K562 (cell line): ENCODE measurements at regions of chr1 and their contacts with region 1.

Region 1: GRCh38 chr1:234599617-234600417 is 10.2 kb downstream of the IRF2BP2 start:
- DNase-seq: peak; percentile 84 to 92 (median 86)
- ATAC-seq: peak; percentile 74
- H3K4me3 ChIP-seq: peak overlapping the region; percentile 46
- H3K27ac ChIP-seq: peak overlapping the region; percentile 90
- H3K4me1 ChIP-seq: peaks cover 21 to 49% of the 10 kb centered on the region in 2 experiments
- H3K27me3 ChIP-seq: no peaks in the 10 kb centered on the region
- CTCF ChIP-seq: peak in 1 of 3 experiments; percentile 3; a peak in 1 of 6 replicates
- EP300 ChIP-seq: peak; percentile 18; the same call in 1 of the 2 replicates
- POLR2A ChIP-seq: peak; percentile 79
- RAD21 ChIP-seq: peak; percentile 4 to 23; a peak in 2 of 4 replicates

Region 2: DNA sequence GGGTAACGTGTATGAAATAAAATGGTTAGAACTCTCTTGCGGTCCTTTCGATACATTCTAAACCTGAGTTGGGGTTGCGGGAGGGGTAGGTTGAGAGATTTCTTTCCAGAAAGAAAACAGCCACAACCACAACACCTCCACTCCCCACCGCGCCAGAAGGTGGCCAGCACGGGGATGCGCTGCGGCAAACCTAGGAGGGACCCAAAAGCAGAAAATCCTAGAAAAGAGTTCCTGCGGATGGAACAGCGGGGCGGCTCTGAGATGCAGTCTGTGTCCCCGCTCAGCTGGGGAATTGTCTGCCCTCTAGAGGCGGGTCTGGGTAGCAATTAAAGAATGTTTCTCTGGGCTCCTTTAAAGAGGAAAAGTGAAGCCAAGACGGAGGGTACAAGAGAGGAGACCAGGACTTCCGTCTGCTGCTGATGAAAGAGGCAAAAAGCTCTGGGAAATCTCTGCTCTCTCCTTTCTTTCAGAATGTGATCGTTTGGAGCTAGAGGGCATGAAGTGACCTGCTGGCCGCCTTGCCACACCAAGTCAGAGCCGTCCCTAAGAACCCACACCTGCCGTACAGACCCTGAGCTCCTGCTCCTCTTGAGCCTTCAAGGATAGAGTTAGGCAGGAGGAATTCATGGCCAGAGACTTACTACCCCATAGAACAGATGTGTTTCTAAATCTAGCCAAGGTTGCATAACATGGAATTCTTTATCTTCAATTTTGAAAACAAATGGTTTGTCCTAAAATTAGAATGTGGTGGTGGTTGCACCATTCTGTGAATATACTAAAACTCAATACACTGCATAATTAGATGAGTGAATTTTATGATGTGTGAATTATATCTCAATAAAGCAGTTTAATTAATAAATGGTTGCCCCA is 273.1 kb before region 1 on chr1:
- CTCF ChIA-PET with region 1: no interaction called
- POLR2A ChIA-PET with region 1: no interaction called
- in situ Hi-C with region 1: loop called (anchors 10 kb)
- intact Hi-C with region 1: no loop called
- DNase-seq: peak; percentile 71 to 78 (median 75)
- ATAC-seq: peak; percentile 90
- H3K4me3 ChIP-seq: no peak overlapping the region
- H3K27ac ChIP-seq: no peak overlapping the region
- H3K4me1 ChIP-seq: no peaks in the 10 kb centered on the region; a peak in 3 of 5 replicates
- H3K27me3 ChIP-seq: peaks cover 17 to 27% of the 10 kb centered on the region in 2 experiments
- CTCF ChIP-seq: peak; percentile 83 to 94 (median 84)
- EP300 ChIP-seq: no peak
- POLR2A ChIP-seq: no peak
- RAD21 ChIP-seq: peak; percentile 47 to 67; a peak in 3 of 4 replicates

Region 3: DNA sequence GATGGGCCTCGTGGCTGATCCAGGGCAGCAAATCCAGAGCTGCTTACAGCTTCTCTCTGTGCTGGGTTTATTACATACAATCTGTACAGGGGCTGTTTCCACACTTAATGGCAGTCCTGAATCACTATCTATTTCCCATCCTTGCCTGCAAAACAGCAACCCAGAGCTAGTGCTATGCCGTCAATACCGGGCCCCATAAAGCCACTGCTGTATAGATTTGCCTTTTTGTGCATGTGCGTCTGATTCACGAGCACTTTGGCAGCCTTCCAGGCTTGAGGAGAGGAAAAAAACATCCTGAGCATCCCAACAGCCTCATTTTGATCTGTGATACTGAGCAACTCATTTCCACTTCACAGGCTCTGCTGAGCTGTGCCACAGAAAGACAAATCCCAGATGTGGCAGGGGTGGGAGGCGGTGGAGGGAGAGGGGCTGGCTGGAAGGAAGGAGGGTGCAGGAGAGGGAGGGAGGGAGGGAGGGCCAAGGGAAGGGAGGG is 55.7 kb before region 1 on chr1:
- CTCF ChIA-PET with region 1: interaction called, 3 read pairs
- POLR2A ChIA-PET with region 1: interaction called, 4 read pairs
- in situ Hi-C with region 1: no loop called
- intact Hi-C with region 1: loop called (anchors 5 kb)
- DNase-seq: peak; percentile 45 to 92 (median 58)
- ATAC-seq: peak; percentile 61
- H3K4me3 ChIP-seq: no peak overlapping the region
- H3K27ac ChIP-seq: peak overlapping the region; percentile 72
- H3K4me1 ChIP-seq: peaks cover 30 to 53% of the 10 kb centered on the region in 2 experiments
- H3K27me3 ChIP-seq: no peaks in the 10 kb centered on the region
- CTCF ChIP-seq: no peak
- EP300 ChIP-seq: peak; percentile 12; the same call in 1 of the 2 replicates
- POLR2A ChIP-seq: no peak
- RAD21 ChIP-seq: no peak

Region 4: DNA sequence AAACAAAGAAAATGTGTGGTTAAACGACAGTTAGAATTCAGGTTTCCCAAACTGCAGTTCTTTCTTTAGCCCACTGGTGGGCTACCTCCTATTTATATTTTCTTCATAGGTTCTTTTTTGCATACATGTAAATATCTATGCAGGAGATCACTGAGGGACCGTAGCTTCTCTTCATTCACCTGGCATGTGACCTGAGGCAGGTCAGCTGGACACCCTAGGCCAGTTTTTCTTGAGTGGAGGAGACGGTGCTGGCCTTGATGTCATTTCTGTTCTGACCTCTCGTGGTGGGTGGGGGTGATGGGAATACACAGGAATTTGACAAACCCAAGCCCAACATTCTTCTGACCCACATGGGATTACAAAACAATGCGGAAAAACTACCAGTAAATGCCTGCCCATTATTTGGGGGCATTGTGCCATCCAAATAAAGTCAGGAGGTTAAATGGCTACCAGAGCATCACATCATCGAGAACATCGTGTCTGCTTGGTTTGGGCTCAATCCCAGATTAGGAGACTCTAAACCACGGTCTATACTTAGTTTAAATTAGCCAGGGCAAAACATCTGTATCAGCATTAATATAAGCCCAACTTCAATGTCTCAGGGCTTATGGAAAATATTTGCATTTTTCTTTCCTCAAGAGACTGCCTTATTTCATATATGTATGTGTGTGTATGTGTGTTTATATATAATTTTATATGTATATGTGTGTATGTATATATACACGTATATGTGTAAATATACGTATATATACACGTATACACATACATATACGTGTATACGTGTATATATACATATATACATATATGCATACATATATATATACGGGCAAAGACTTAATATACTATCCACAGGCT is 17.5 kb after region 1 on chr1:
- CTCF ChIA-PET with region 1: no interaction called
- POLR2A ChIA-PET with region 1: interaction called, 26 read pairs
- in situ Hi-C with region 1: no loop called
- intact Hi-C with region 1: no loop called
- DNase-seq: no peak
- ATAC-seq: no peak
- H3K4me3 ChIP-seq: no peak overlapping the region
- H3K27ac ChIP-seq: no peak overlapping the region
- H3K4me1 ChIP-seq: peaks cover 14 to 21% of the 10 kb centered on the region in 2 experiments
- H3K27me3 ChIP-seq: no peaks in the 10 kb centered on the region
- CTCF ChIP-seq: peak in 2 of 3 experiments; percentile 40 to 48; a peak in 4 of 6 replicates
- EP300 ChIP-seq: no peak
- POLR2A ChIP-seq: no peak
- RAD21 ChIP-seq: peak; percentile 14 to 53; a peak in 2 of 4 replicates

Region 5: GRCh38 chr1:234963180-234963903 is 363.5 kb after region 1 on chr1:
- CTCF ChIA-PET with region 1: no interaction called
- POLR2A ChIA-PET with region 1: interaction called, 3 read pairs
- in situ Hi-C with region 1: no loop called
- intact Hi-C with region 1: loop called (anchors 5 kb)
- DNase-seq: peak; percentile 60 to 80 (median 70)
- ATAC-seq: peak; percentile 64
- H3K4me3 ChIP-seq: no peak overlapping the region
- H3K27ac ChIP-seq: peak overlapping the region; percentile 82
- H3K4me1 ChIP-seq: peaks cover 27 to 66% of the 10 kb centered on the region in 2 experiments
- H3K27me3 ChIP-seq: no peaks in the 10 kb centered on the region
- CTCF ChIP-seq: no peak
- EP300 ChIP-seq: peak; percentile 75
- POLR2A ChIP-seq: no peak
- RAD21 ChIP-seq: peak in 1 of 2 experiments; percentile 18; a peak in 2 of 4 replicates

Region 6: DNA sequence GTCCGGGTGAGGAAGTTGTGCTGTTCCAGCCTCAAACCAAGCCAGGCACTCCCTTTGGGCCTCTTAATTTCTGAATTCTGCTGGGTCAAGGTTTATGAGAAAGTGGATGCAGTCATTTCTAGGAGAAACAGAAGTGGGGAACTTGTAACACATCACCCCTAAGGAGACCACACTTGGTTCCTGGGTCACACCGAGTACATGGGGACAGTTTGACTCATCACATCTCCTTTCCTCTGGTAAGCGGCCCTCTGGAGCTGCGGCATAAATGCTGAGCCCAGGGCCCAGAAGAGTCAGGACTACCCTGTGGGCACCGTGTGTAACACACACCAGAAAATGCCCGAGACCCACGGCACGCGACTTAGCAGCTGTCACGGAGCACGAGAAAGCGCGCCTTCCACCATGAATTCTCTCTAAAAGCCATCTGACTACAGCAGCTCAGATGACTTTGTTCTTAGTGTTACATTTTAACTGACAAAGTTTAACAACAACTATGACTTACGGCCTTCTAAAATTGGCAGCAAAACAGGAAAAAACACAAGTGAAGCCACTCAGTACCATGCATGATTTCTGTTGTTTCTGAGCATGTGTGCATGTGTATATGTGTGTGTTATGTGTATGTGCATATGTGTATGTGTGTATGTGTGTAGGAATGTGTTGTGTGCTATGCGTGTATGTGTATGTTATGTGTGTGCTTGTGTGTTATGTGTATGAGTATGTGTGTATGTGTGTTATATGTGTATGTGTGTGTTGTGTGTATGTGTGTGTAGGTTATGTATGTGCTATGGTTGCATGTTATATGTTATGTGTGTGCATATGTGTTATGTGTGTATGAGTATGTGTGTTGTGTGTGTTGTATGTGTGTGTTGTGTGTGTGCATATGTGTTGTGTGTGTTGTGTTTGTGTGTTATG is 478.0 kb after region 1 on chr1:
- CTCF ChIA-PET with region 1: no interaction called
- POLR2A ChIA-PET with region 1: interaction called, 5 read pairs
- in situ Hi-C with region 1: loop called (anchors 5 kb)
- intact Hi-C with region 1: loop called (anchors 1 kb)
- DNase-seq: no peak
- ATAC-seq: no peak
- H3K4me3 ChIP-seq: no peak overlapping the region
- H3K27ac ChIP-seq: no peak overlapping the region; the same call in 2 of the 3 replicates
- H3K4me1 ChIP-seq: peaks cover 21% of the 10 kb centered on the region in 2 experiments
- H3K27me3 ChIP-seq: no peaks in the 10 kb centered on the region
- CTCF ChIP-seq: no peak
- EP300 ChIP-seq: no peak
- POLR2A ChIP-seq: no peak
- RAD21 ChIP-seq: no peak